IMR-90 (cell line): ENCODE measurements at regions of chr17 and their contacts with region 1.

Region 1: DNA sequence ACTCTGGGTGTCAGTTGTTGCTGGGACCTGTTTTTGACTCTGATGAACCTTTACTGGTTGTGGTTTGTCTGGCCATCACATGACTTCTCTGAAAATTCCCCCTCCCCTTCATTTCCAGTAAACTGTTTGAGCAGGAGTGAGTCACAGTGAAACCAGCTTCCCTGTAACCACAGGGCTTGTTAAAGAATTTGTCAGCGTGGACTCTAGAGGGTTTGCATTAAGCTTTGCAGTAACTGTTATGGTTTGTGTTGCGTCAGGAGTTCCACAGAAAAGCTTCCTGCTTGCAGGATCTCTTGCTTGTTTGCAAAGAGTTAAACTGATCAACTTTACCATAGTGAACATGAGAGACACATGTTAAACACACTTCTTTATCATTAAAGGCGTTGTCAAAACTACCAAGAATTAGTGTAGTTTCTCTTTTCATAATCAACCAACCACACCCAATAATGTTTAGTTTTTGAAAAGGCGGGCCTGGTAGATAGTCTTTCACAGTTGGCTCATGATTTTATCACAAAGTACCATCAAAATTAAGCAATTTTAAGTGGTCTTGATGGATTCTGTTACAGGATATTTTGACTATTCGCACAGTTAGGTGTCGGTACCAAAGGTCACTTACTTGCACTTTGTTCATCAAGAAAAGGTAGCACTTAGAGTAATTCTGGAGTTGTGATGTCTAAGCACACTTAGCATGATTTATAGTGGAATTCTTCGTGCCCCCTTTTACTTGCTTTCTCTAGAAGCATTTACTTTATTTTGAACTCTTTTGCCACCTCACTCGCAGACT is 79.3 kb downstream of the VMP1 start:
- DNase-seq: peak; percentile 100
- ATAC-seq: peak; percentile 89
- H3K4me3 ChIP-seq: peak overlapping the region; percentile 9; the same call in 1 of the 2 replicates
- H3K27ac ChIP-seq: peak overlapping the region; percentile 93
- H3K4me1 ChIP-seq: peaks cover 16% of the 10 kb centered on the region
- H3K27me3 ChIP-seq: no peaks in the 10 kb centered on the region
- CTCF ChIP-seq: no peak
- POLR2A ChIP-seq: 0 out of 2 replicates have a peak, but pooled peaks have one; percentile 24
- RAD21 ChIP-seq: peak; percentile 23

Region 2: DNA sequence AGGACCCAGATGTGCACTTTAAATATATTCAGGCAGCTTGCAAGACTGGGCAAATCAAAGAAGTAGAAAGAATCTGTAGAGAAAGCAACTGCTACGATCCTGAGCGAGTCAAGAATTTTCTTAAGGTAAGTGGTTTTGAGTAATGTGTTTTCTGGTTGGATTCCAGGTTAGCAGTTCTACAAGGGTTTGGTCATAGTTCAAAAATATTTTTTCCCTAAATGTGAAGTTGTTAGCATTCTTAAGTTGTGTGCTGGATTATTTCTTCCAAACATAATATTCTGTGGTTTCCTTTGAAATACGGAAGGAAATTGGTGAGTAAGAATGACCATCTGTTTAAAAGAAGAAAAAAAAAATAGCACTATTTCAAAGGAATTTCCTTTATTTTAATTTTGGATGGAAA is 117.9 kb before region 1 on chr17:
- CTCF ChIA-PET with region 1: no interaction called
- POLR2A ChIA-PET with region 1: no interaction called
- dilution Hi-C with region 1: no loop called
- in situ Hi-C with region 1: no loop called
- intact Hi-C with region 1: no loop called
- DNase-seq: peak; percentile 97
- ATAC-seq: peak; percentile 71
- H3K4me3 ChIP-seq: no peak overlapping the region
- H3K27ac ChIP-seq: no peak overlapping the region
- H3K4me1 ChIP-seq: peaks cover 14% of the 10 kb centered on the region
- H3K27me3 ChIP-seq: no peaks in the 10 kb centered on the region
- CTCF ChIP-seq: no peak
- POLR2A ChIP-seq: no peak
- RAD21 ChIP-seq: no peak

Region 3: DNA sequence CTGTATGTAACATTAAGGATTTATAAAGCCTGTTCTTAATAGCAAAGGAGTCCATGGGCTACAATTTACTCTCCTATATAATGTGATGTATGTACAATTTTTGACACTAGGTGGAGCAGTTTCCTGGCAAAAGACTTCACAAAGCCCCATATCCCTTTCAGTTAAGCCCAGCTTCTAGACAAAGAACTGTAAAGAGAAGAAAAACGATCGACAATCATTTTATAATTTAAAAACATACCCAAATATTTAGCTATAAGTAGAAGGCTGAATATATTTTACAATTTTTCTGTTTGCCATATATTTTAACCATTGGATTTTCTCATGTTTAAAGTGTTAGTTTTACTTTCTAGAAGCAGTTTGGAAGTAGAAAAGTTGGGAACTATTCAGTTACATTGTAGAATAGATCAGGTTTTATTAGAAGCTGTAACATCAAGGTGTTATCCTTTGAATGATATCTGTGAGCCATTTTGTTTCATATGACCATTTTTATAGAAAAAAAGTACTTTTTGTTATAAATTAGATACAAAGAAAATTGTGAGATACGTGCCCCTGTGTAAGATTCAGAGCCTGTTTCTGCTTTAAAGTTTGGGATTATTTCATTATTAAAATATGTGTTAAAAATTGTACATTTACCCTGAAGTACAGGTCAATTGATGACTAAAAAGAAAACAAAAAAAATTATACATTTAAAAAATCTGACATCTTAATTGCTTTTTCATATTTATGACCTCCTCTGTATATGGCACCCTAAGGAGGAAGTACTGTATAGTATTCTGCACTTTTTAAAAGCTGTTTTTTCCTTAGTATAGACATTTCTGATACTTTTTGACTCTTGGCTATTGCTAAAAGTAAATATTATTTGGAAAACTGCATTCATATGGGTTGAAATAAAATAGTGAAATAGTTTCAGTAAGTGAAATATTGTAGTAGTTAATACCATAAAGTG is 32.9 kb before region 1 on chr17:
- CTCF ChIA-PET with region 1: interaction called, 22 read pairs
- POLR2A ChIA-PET with region 1: interaction called, 6 read pairs
- dilution Hi-C with region 1: no loop called
- in situ Hi-C with region 1: no loop called
- intact Hi-C with region 1: loop called (anchors 2 kb)
- DNase-seq: peak; percentile 93
- ATAC-seq: peak; percentile 74
- H3K4me3 ChIP-seq: no peak overlapping the region
- H3K27ac ChIP-seq: peak overlapping the region; percentile 78; the same call in 1 of the 2 replicates
- H3K4me1 ChIP-seq: peaks cover 14% of the 10 kb centered on the region
- H3K27me3 ChIP-seq: no peaks in the 10 kb centered on the region
- CTCF ChIP-seq: peak; percentile 81
- POLR2A ChIP-seq: peak; percentile 40; the same call in 1 of the 2 replicates
- RAD21 ChIP-seq: peak; percentile 94

Region 4: GRCh38 chr17:59762513-59763374 is 24.0 kb before region 1 on chr17:
- CTCF ChIA-PET with region 1: no interaction called
- POLR2A ChIA-PET with region 1: interaction called, 3 read pairs
- dilution Hi-C with region 1: no loop called
- in situ Hi-C with region 1: no loop called
- intact Hi-C with region 1: loop called (anchors 1 kb)
- DNase-seq: peak; percentile 89
- ATAC-seq: no peak
- H3K4me3 ChIP-seq: no peak overlapping the region
- H3K27ac ChIP-seq: peak overlapping the region; percentile 70; the same call in 1 of the 2 replicates
- H3K4me1 ChIP-seq: peaks cover 21% of the 10 kb centered on the region
- H3K27me3 ChIP-seq: no peaks in the 10 kb centered on the region
- CTCF ChIP-seq: no peak
- POLR2A ChIP-seq: peak; percentile 13; the same call in 1 of the 2 replicates
- RAD21 ChIP-seq: no peak

Region 5: DNA sequence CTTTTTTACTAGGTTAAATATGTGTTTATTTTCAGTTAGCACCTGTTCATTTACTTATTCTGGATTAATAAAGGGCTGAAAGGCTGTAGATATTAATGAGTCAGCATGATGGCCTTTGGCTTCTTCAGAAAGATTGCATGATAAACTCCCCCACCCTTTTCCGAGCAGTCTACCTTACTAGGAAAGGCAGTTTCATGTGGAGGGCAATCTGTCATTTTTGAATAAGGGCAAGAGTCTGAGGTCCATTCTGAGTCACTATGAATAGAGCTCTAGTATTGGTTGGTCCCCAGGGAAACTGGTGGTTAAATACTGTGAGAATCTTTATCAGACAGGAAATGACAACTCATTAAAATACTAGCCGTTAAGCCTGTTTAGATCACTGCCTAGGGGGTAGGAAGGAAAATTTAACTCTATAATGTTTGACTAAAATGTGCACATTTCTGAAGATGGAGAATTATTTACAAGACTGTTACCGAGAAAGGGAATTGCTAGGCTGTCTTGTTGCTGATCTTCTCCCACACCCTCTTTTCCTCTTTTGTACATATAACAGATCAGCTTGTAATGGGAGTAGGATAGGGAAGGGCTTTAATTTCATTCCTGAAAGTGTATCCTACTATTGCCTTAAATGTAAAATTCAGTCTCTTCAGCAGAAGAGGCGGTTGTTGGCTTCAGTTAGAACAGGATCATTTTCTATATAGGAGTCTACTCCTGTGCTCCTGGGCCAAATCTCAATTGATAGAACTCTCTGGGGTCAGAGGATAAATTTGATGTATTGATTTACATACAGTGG is 42.7 kb after region 1 on chr17:
- CTCF ChIA-PET with region 1: interaction called, 3 read pairs
- POLR2A ChIA-PET with region 1: interaction called, 14 read pairs
- dilution Hi-C with region 1: no loop called
- in situ Hi-C with region 1: loop called (anchors 5 kb)
- intact Hi-C with region 1: no loop called
- DNase-seq: peak; percentile 98
- ATAC-seq: peak; percentile 75
- H3K4me3 ChIP-seq: peak overlapping the region; percentile 33; the same call in 1 of the 2 replicates
- H3K27ac ChIP-seq: peak overlapping the region; percentile 100
- H3K4me1 ChIP-seq: peaks cover 25% of the 10 kb centered on the region
- H3K27me3 ChIP-seq: no peaks in the 10 kb centered on the region
- CTCF ChIP-seq: no peak
- POLR2A ChIP-seq: no peak; the same call in 1 of the 2 replicates
- RAD21 ChIP-seq: 0 out of 2 replicates have a peak, but pooled peaks have one; percentile 16